AG04450 (cell line): ENCODE measurements at regions of chr18 and their contacts with region 1.

Region 1: GRCh38 chr18:59823596-59824195 is 76.1 kb upstream of the PMAIP1 start:
- DNase-seq: peak; percentile 68
- H3K4me3 ChIP-seq: no peak overlapping the region
- H3K27ac ChIP-seq: no peak overlapping the region
- H3K27me3 ChIP-seq: no peaks in the 10 kb centered on the region
- CTCF ChIP-seq: peak; percentile 92

Region 2: GRCh38 chr18:59249205-59249774 is 574.4 kb before region 1 on chr18:
- CTCF ChIA-PET with region 1: interaction called, 17 read pairs
- POLR2A ChIA-PET with region 1: no interaction called
- DNase-seq: peak; percentile 65
- H3K4me3 ChIP-seq: no peak overlapping the region
- H3K27ac ChIP-seq: no peak overlapping the region
- H3K27me3 ChIP-seq: peaks cover 13% of the 10 kb centered on the region
- CTCF ChIP-seq: peak; percentile 88

Region 3: GRCh38 chr18:59437851-59438569 is 385.7 kb before region 1 on chr18:
- CTCF ChIA-PET with region 1: interaction called, 10 read pairs
- POLR2A ChIA-PET with region 1: no interaction called
- DNase-seq: no peak
- H3K4me3 ChIP-seq: no peak overlapping the region
- H3K27ac ChIP-seq: no peak overlapping the region
- H3K27me3 ChIP-seq: no peaks in the 10 kb centered on the region
- CTCF ChIP-seq: no peak

Region 4: GRCh38 chr18:59547581-59548182 is 276.0 kb before region 1 on chr18:
- CTCF ChIA-PET with region 1: interaction called, 10 read pairs
- POLR2A ChIA-PET with region 1: no interaction called
- DNase-seq: peak; percentile 74
- H3K4me3 ChIP-seq: no peak overlapping the region; the same call in 1 of the 2 replicates
- H3K27ac ChIP-seq: peak overlapping the region; percentile 33
- H3K27me3 ChIP-seq: no peaks in the 10 kb centered on the region
- CTCF ChIP-seq: peak; percentile 41; the same call in 1 of the 2 replicates

Region 5: DNA sequence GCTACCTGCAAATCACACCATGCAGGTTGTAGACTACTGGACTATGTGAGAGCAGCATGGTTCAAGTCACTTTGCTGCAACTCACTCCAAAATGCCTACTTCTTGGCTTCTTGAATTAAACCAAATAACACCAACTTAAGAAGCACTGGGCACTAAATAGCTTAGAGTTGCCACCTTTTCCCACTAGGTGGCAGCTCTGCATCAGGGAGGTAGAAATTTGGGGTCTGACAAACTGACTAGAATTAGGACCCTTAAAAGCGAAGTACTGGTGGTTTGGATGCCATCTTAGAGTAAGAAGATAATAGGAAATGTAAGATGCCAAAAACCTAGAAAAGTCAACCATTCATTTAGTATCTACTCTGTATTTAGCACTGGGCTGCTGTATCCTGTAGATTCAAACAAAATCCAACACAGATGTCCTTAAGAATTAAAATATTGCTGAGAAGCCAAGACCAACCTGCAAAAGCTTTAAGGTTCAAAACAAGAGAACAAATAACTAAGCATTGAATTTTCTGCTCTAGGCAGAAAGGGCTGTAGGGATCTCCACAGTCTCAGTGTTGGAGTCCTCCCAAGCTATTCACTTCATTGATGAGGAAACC is 192.0 kb before region 1 on chr18:
- CTCF ChIA-PET with region 1: interaction called, 135 read pairs
- POLR2A ChIA-PET with region 1: interaction called, 4 read pairs
- DNase-seq: no peak
- H3K4me3 ChIP-seq: no peak overlapping the region
- H3K27ac ChIP-seq: no peak overlapping the region
- H3K27me3 ChIP-seq: no peaks in the 10 kb centered on the region
- CTCF ChIP-seq: peak; percentile 87

Region 6: DNA sequence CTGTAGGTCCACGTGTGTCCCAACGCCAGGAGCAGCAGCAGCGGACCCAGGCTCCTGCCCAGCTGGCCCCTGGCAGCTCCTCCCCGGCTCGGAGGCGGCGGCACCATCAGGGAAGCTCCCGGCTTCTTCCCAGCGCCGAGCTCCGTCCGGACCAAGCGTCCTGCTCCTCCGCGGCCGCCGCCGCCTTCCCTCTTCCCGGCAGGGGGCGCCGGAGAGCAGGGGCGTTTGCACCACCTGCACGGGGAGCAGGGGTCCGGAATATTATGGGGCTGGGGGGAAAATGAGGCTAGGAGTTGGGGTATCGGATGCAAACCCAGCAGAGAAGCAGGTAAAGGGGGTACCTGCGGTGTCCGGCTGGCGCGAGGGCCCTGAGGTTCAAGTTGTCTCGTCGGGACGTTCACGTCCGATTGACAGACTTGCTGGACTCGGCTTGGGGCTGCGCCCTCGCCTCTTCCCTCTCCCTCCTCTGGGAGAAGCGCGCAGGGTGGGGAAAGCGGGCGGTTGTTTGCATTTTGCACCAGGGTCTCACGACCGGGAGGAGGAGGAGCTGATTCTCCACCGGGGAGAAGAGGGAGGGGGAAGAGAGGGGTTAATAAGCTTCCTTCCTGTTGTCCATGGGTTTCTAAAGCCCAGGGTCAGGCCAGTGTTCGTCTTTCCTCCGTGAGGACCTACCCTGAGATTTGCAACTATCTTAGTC is 126.3 kb before region 1 on chr18 and contains the start of gene CCBE1:
- CTCF ChIA-PET with region 1: interaction called, 108 read pairs
- POLR2A ChIA-PET with region 1: interaction called, 20 read pairs
- DNase-seq: no peak
- H3K4me3 ChIP-seq: peak within 1 kb of the TSS; percentile 95
- H3K27ac ChIP-seq: peak within 1 kb of the TSS; percentile 25
- H3K27me3 ChIP-seq: no peaks in the 10 kb centered on the region
- CTCF ChIP-seq: peak; percentile 96
- polyA plus RNA-seq, gene CCBE1: 40.4 and 51.5 TPM in 2 replicates

Region 7: DNA sequence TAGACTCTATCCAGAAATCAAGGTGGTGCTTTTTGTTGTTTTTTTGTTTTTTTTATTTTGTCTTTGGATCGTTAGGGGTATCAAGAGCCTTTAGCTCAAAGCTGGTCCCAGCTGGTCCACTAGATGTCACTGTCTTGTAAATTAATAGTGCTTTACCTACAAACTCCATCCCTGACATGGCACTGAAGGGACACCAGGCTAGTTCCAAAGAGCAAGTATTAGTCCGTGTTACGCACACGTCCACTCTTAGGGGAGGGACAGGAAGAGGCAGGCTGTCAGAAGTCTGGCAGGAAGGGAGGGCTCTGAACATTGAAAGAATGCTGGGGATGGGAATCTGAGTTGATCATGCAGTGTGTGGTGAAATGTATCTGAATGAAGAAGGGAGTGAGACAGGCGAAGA is 40.6 kb before region 1 on chr18:
- CTCF ChIA-PET with region 1: interaction called, 34 read pairs
- POLR2A ChIA-PET with region 1: interaction called, 3 read pairs
- DNase-seq: no peak
- H3K4me3 ChIP-seq: no peak overlapping the region
- H3K27ac ChIP-seq: no peak overlapping the region
- H3K27me3 ChIP-seq: no peaks in the 10 kb centered on the region
- CTCF ChIP-seq: peak; percentile 65

Region 8: DNA sequence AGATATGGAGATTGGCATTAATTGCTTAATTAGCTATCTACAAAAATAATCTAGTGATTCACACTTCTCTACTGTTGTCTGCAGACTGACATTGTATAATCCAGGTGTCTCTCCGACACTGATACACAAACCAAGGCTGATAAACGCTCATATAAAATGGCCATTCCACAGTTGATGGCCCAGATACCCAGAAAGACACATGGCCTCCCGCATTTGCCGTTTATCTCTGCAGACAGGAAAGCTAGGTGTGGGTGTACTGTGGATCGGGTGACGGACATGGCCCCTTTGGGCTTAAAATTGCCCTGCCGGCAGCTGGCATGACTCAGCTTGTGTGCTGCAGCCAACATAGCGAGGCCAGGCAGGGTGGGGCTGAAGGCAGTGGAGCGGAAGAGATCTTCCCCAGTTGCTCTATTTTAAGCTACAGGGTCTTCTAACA is 94.6 kb after region 1 on chr18:
- CTCF ChIA-PET with region 1: no interaction called
- POLR2A ChIA-PET with region 1: no interaction called
- DNase-seq: no peak
- H3K4me3 ChIP-seq: no peak overlapping the region
- H3K27ac ChIP-seq: peak overlapping the region; percentile 57
- H3K27me3 ChIP-seq: no peaks in the 10 kb centered on the region
- CTCF ChIP-seq: no peak